CD4-positive, alpha-beta memory T cell (primary cell): ENCODE measurements at regions of chr14 and their contacts with region 1.

Region 1: GRCh38 chr14:69673578-69674305 is 62.3 kb downstream of the SUSD6 start:
- DNase-seq: no peak
- H3K4me3 ChIP-seq: peak overlapping the region; percentile 4 to 11
- H3K4me3 Mint-ChIP-seq: peak overlapping the region; percentile 58 to 83 (median 70)
- H3K27ac ChIP-seq: peak overlapping the region; percentile 32
- H3K27ac Mint-ChIP-seq: peak overlapping the region; percentile 56 to 95 (median 83)
- H3K4me1 ChIP-seq: peaks cover 83% of the 10 kb centered on the region
- H3K4me1 Mint-ChIP-seq: peaks cover 74 to 84% (median 78%) of the 10 kb centered on the region in 4 donors
- H3K27me3 ChIP-seq: no peaks in the 10 kb centered on the region
- H3K27me3 Mint-ChIP-seq: no peaks in the 10 kb centered on the region

Region 2: DNA sequence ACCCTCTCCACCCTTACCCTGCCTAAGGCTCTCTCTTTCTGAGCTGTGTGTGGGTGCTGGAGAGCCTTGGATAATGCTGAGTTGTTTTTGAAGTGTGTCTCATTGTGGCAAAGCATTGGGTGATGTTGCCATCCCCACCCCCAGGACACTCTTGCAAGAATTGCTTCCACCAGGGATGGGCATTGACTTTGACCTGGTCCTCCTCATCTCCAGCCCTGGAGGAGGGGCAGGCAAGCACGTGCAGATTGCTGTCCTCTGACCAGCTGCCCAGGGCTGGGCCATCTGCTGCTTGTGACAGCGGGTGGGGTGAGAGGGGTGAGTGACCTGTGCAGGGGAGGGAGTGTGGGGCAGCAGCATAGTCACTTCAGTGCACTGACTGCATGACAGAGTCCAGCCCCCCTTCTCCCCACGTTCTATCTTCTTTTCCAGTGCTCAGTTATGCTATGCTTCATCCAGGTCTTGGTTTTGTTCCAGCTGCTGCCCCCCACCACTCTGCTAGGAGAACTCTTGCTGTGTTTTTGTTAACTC is 36.2 kb before region 1 on chr14:
- CTCF ChIA-PET with region 1: no interaction called
- POLR2A ChIA-PET with region 1: interaction called, 5 read pairs
- intact Hi-C with region 1: loop called (anchors 2 kb)
- DNase-seq: no peak
- H3K4me3 ChIP-seq: no peak overlapping the region
- H3K4me3 Mint-ChIP-seq: peak overlapping the region in 7 of 8 donors; percentile 68 to 88 (median 78)
- H3K27ac ChIP-seq: peak overlapping the region; percentile 47
- H3K27ac Mint-ChIP-seq: peak overlapping the region; percentile 85 to 97 (median 92)
- H3K4me1 ChIP-seq: peaks cover 75% of the 10 kb centered on the region
- H3K4me1 Mint-ChIP-seq: peaks cover 67 to 89% (median 79%) of the 10 kb centered on the region in 4 donors
- H3K27me3 ChIP-seq: no peaks in the 10 kb centered on the region
- H3K27me3 Mint-ChIP-seq: no peaks in the 10 kb centered on the region

Region 3: DNA sequence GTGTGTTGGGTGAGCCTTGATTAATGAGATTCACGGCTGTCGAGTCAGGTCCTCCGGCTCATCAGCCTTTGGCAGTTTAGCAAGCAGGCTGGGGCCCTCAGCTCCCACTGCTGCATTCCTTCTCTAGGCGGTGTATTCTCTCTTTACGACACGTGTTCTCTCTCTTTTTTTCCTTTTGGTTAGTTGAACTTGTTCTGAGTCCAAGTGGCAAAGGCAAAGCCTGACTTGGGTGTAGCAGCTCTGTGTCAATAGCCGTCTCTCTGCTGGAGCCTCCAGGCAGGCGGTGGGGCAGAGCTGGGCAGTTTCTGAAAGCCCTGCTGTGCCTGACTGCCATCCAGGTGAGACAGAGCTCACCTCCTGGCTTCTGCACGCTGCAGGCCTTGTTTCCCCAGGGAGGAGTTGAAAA is 15.8 kb before region 1 on chr14:
- CTCF ChIA-PET with region 1: no interaction called
- POLR2A ChIA-PET with region 1: interaction called, 3 read pairs
- intact Hi-C with region 1: loop called (anchors 2 kb)
- DNase-seq: no peak
- H3K4me3 ChIP-seq: no peak overlapping the region
- H3K4me3 Mint-ChIP-seq: peak overlapping the region in 5 of 8 donors; percentile 38 to 58 (median 51)
- H3K27ac ChIP-seq: no peak overlapping the region
- H3K27ac Mint-ChIP-seq: peak overlapping the region; percentile 60 to 88 (median 64)
- H3K4me1 ChIP-seq: peaks cover 78% of the 10 kb centered on the region
- H3K4me1 Mint-ChIP-seq: peaks cover 68 to 94% (median 83%) of the 10 kb centered on the region in 4 donors
- H3K27me3 ChIP-seq: no peaks in the 10 kb centered on the region
- H3K27me3 Mint-ChIP-seq: no peaks in the 10 kb centered on the region